Caco-2 (cell line): ENCODE measurements at regions of chr4 and their contacts with region 1.

Region 1: DNA sequence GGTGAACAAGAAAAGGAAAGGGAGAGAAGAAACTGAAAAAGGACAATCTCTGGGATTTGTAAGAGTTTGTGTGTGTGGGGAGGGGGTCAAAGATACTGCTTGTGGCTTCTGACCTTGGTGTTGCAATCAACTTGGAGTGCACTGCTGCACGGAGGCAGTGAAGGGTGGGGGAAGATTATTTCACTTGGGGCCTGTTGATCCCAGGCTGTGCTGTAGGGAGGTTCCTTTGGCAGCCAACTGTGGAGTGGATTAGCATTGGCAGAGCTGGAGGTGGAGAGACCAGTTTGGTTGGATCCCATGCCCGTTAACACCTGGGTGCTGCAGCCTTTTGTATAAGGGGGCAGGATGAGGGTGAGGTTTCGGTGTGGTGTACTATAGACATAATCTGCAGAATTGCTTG is 38.2 kb downstream of the AFF1 start:
- DNase-seq: peak; percentile 30 to 48
- H3K4me3 ChIP-seq: no peak overlapping the region
- H3K4me3 Mint-ChIP-seq: peak overlapping the region; percentile 30
- H3K27ac Mint-ChIP-seq: peak overlapping the region; percentile 44
- H3K4me1 ChIP-seq: peaks cover 53% of the 10 kb centered on the region
- H3K4me1 Mint-ChIP-seq: peaks cover 43% of the 10 kb centered on the region
- H3K27me3 ChIP-seq: no peaks in the 10 kb centered on the region
- H3K27me3 Mint-ChIP-seq: no peaks in the 10 kb centered on the region
- CTCF ChIP-seq: no peak

Region 2: GRCh38 chr4:86934771-86935565 is 38.0 kb before region 1 on chr4 and contains the start of gene AFF1:
- CTCF ChIA-PET with region 1: interaction called, 9 read pairs
- POLR2A ChIA-PET with region 1: interaction called, 15 read pairs
- intact Hi-C with region 1: loop called (anchors 2 kb)
- DNase-seq: peak; percentile 93 to 95
- H3K4me3 ChIP-seq: peak within 1 kb of the TSS; percentile 84
- H3K4me3 Mint-ChIP-seq: peak within 1 kb of the TSS; percentile 91
- H3K27ac Mint-ChIP-seq: peak within 1 kb of the TSS; percentile 89
- H3K4me1 ChIP-seq: peaks cover 22% of the 10 kb centered on the region
- H3K4me1 Mint-ChIP-seq: peaks cover 20% of the 10 kb centered on the region
- H3K27me3 ChIP-seq: no peaks in the 10 kb centered on the region
- H3K27me3 Mint-ChIP-seq: no peaks in the 10 kb centered on the region
- CTCF ChIP-seq: peak in 1 of 2 experiments; percentile 44
- total RNA-seq, gene AFF1: 45.2 and 48.3 TPM in 2 replicates

Region 3: DNA sequence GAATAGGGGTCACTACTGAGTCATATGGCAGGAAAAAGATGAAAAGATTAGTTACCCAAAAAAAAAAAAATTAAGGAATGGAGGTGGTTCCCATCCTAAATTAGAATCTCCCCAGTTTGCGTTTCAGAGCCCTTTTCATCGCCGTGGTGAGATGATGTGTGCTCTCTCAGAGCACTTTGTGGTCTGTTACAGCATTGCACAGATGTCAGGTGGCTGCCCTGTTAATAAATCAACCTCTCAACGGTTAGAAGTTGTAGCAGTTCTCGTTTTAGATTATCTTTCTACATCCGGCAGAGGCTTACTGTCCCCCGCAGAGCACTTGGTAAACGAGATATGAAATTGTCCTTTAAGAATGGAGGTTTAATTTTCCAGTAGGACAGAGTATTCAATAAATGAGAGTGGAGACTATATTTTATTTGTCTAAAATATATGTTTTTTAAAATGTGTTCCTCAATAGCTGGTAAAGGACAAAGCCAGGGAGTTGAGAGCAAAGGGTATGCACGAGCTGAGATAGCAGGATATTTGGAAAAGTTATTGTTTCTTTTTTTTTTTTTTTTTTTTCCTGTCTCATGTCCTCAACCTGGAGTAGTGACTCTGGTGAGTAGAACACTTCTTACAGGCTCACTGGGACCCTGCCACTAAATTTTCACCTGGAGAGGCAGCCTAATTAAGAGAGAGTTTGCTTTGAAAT is 11.2 kb before region 1 on chr4:
- CTCF ChIA-PET with region 1: interaction called, 3 read pairs
- POLR2A ChIA-PET with region 1: no interaction called
- intact Hi-C with region 1: loop called (anchors 1 kb)
- DNase-seq: no peak
- H3K4me3 ChIP-seq: no peak overlapping the region
- H3K4me3 Mint-ChIP-seq: no peak overlapping the region
- H3K27ac Mint-ChIP-seq: no peak overlapping the region
- H3K4me1 ChIP-seq: peaks cover 28% of the 10 kb centered on the region
- H3K4me1 Mint-ChIP-seq: peaks cover 14% of the 10 kb centered on the region
- H3K27me3 ChIP-seq: no peaks in the 10 kb centered on the region
- H3K27me3 Mint-ChIP-seq: no peaks in the 10 kb centered on the region
- CTCF ChIP-seq: no peak

Region 4: GRCh38 chr4:86990510-86990909 is 17.5 kb after region 1 on chr4:
- CTCF ChIA-PET with region 1: no interaction called
- POLR2A ChIA-PET with region 1: no interaction called
- intact Hi-C with region 1: no loop called
- DNase-seq: no peak
- H3K4me3 ChIP-seq: no peak overlapping the region
- H3K4me3 Mint-ChIP-seq: no peak overlapping the region
- H3K27ac Mint-ChIP-seq: no peak overlapping the region
- H3K4me1 ChIP-seq: peaks cover 7% of the 10 kb centered on the region; the same call in 1 of the 2 replicates
- H3K4me1 Mint-ChIP-seq: peaks cover 8% of the 10 kb centered on the region
- H3K27me3 ChIP-seq: no peaks in the 10 kb centered on the region
- H3K27me3 Mint-ChIP-seq: no peaks in the 10 kb centered on the region
- CTCF ChIP-seq: no peak

Region 5: DNA sequence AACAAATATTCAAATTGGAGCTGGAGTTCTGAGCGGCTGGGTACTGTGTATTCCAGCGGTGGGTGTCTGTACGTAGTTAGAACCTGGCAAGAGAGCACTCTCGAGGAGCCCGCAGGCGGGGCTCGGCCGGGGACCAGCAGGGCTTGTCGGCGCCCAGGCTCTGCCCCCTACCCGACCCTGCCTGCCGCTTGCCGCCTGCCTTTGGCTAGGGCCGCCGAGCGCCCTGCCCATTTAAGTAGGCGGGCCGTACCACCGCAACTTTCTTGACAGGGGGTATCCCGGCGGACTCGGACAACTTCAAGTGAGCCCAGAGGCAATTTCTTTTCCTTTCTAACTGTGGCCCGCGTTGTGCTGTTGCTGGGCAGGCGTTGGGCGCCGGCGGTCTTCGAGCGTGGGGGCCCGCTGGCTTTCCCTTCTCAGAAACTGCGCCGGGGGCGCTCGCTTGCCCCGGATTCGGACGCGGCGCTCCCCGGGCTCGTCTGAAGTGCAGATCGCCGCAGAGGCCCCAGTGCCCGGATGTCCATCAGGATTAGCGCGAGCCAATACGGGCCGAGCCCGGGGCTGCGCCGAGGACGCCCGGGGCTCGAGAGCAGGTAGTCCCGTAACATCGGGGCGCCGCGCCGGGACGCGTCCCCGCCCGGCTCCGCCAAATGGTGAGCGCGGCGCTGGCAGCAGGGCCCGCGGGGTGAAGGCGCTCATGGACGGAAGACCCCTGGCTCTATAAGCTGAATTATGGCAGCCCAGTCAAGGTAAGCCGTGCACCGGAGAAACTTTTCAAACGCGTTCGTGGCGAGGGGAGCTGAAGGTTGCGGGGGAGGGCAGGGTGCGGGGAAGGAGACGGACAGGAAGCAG is 33.9 kb after region 1 on chr4:
- CTCF ChIA-PET with region 1: no interaction called
- POLR2A ChIA-PET with region 1: interaction called, 6 read pairs
- intact Hi-C with region 1: loop called (anchors 1 kb)
- DNase-seq: peak; percentile 95
- H3K4me3 ChIP-seq: peak overlapping the region; percentile 94
- H3K4me3 Mint-ChIP-seq: peak overlapping the region; percentile 97
- H3K27ac Mint-ChIP-seq: peak overlapping the region; percentile 93
- H3K4me1 ChIP-seq: peaks cover 41% of the 10 kb centered on the region
- H3K4me1 Mint-ChIP-seq: peaks cover 8% of the 10 kb centered on the region
- H3K27me3 ChIP-seq: no peaks in the 10 kb centered on the region
- H3K27me3 Mint-ChIP-seq: no peaks in the 10 kb centered on the region
- CTCF ChIP-seq: peak in 1 of 2 experiments; percentile 30